ENCODE measurements at regions of chr6 and their contacts with region 1.

Region 1: GRCh38 chr6:32244946-32245398 is 21.1 kb upstream of the NOTCH4 start:
- DNase-seq: peak; percentile 87
- ATAC-seq: peak; percentile 93
- H3K4me3 ChIP-seq: peak overlapping the region in 3 of 5 experiments; percentile 8 to 40 (median 24)
- H3K4me3 Mint-ChIP-seq: peak overlapping the region; percentile 76
- H3K27ac ChIP-seq: no peak overlapping the region
- H3K27ac Mint-ChIP-seq: peak overlapping the region; percentile 33
- H3K4me1 ChIP-seq: peaks cover 8 to 16% of the 10 kb centered on the region in 2 donors
- H3K4me1 Mint-ChIP-seq: peaks cover 15% of the 10 kb centered on the region
- H3K27me3 ChIP-seq: no peaks in the 10 kb centered on the region
- H3K27me3 Mint-ChIP-seq: no peaks in the 10 kb centered on the region
- CTCF ChIP-seq: peak; percentile 90

Region 2: DNA sequence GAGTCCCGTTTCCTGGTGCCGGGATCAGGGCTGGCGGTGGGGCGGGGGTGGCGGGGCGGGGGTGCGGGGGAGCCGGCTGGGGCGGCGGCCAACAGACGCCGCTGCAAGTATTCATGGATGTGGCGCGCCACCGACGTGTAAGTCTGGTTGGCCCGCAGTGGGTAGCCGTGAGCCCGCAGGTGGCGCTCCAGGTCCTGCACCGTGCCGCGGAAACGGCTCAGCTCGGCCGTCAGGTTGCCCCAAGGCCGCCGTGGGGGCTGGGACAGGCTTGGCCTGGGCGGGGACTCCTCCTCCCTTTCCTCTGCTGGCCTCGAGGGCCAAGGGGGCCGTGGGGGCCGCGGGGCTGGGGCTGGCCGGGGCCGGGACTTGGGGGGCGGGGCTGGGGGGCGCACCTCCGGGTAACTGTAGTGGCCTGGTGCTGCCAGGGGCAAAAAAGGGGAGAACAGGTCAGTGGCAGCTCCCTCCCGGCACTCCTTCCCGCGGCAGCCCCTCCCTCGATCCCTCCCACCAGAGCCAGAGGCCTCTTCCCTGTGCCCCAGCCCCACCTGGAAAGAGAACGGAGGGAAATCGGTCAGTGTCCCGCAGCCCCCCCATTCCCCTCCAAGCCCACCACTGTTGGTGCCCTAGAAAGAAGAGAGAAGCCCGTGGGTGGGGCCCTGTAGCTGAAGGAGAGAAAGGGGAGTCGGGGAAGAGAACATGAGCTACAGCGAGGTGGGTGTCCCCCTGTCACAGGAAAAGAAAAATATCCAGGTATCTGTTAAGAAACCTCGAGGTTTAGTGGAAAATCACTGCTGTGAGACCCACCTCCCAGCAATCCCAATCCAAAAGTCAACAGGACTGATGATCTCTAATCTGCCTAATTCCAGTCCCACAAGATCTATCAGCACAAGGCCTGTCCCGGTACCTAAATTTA is 157.1 kb before region 1 on chr6:
- CTCF ChIA-PET with region 1: no interaction called
- POLR2A ChIA-PET with region 1: no interaction called
- intact Hi-C with region 1: no loop called
- DNase-seq: peak; percentile 78
- ATAC-seq: peak; percentile 89
- H3K4me3 ChIP-seq: no peak overlapping the region
- H3K4me3 Mint-ChIP-seq: peak overlapping the region; percentile 27
- H3K27ac ChIP-seq: no peak overlapping the region
- H3K27ac Mint-ChIP-seq: no peak overlapping the region
- H3K4me1 ChIP-seq: peaks cover 8% of the 10 kb centered on the region in 2 donors
- H3K4me1 Mint-ChIP-seq: peaks cover 10% of the 10 kb centered on the region
- H3K27me3 ChIP-seq: peaks cover 0 to 35% (median 18%) of the 10 kb centered on the region in 4 experiments
- H3K27me3 Mint-ChIP-seq: peaks cover 57% of the 10 kb centered on the region
- CTCF ChIP-seq: peak; percentile 52

Region 3: GRCh38 chr6:32118782-32119628 is 126.0 kb before region 1 on chr6:
- CTCF ChIA-PET with region 1: interaction called, 9 read pairs
- POLR2A ChIA-PET with region 1: no interaction called
- intact Hi-C with region 1: loop called (anchors 2 kb)
- DNase-seq: peak; percentile 77
- ATAC-seq: peak; percentile 85
- H3K4me3 ChIP-seq: no peak overlapping the region
- H3K4me3 Mint-ChIP-seq: no peak overlapping the region
- H3K27ac ChIP-seq: no peak overlapping the region
- H3K27ac Mint-ChIP-seq: no peak overlapping the region
- H3K4me1 ChIP-seq: peaks cover 0 to 3% of the 10 kb centered on the region in 2 donors
- H3K4me1 Mint-ChIP-seq: peaks cover 7% of the 10 kb centered on the region
- H3K27me3 ChIP-seq: no peaks in the 10 kb centered on the region
- H3K27me3 Mint-ChIP-seq: no peaks in the 10 kb centered on the region
- CTCF ChIP-seq: peak; percentile 95

Region 4: GRCh38 chr6:32271429-32271828 is 26.5 kb after region 1 on chr6:
- CTCF ChIA-PET with region 1: interaction called, 10 read pairs
- POLR2A ChIA-PET with region 1: interaction called, 3 read pairs
- intact Hi-C with region 1: no loop called
- DNase-seq: peak; percentile 85
- ATAC-seq: peak; percentile 80
- H3K4me3 ChIP-seq: peak overlapping the region in 1 of 5 experiments; percentile 40
- H3K4me3 Mint-ChIP-seq: peak overlapping the region; percentile 44
- H3K27ac ChIP-seq: peak overlapping the region; percentile 61 to 74
- H3K27ac Mint-ChIP-seq: peak overlapping the region; percentile 81
- H3K4me1 ChIP-seq: peaks cover 62% of the 10 kb centered on the region in 2 donors
- H3K4me1 Mint-ChIP-seq: peaks cover 60% of the 10 kb centered on the region
- H3K27me3 ChIP-seq: no peaks in the 10 kb centered on the region
- H3K27me3 Mint-ChIP-seq: no peaks in the 10 kb centered on the region
- CTCF ChIP-seq: no peak

Region 5: GRCh38 chr6:32432050-32432450 is 187.1 kb after region 1 on chr6:
- CTCF ChIA-PET with region 1: interaction called, 28 read pairs
- POLR2A ChIA-PET with region 1: no interaction called
- intact Hi-C with region 1: no loop called
- DNase-seq: peak; percentile 78
- ATAC-seq: peak; percentile 38
- H3K4me3 ChIP-seq: no peak overlapping the region
- H3K4me3 Mint-ChIP-seq: no peak overlapping the region
- H3K27ac ChIP-seq: no peak overlapping the region
- H3K27ac Mint-ChIP-seq: peak overlapping the region; percentile 63
- H3K4me1 ChIP-seq: peaks cover 21 to 27% of the 10 kb centered on the region in 2 donors
- H3K4me1 Mint-ChIP-seq: peaks cover 32% of the 10 kb centered on the region
- H3K27me3 ChIP-seq: no peaks in the 10 kb centered on the region
- H3K27me3 Mint-ChIP-seq: no peaks in the 10 kb centered on the region
- CTCF ChIP-seq: peak; percentile 83

Measured in B cell (primary cell).